Tibial artery (tissue), 4 donors: ENCODE measurements at regions of chr10 and their contacts with region 1.

Region 1: DNA sequence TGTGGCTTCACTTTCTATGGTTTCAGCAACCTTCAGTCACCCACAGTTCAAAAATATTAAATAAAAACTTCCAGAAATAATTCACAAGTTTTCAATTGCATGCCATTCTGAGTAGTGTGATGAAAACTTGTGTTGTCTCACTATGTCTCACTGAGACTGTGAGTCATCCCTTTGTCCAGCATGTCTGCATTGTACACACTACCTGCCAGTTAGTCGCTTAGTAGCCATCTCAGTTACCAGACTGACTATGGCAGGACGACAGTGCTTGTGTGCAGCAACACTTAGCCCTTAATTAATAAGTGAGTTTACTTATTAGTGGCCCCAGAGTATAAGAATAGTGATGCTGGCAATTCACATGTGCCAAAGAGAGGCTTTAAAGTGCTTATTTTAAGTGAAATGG is 22.5 kb downstream of the CCDC186 start:
- DNase-seq: no peak
- H3K4me3 ChIP-seq: no peak overlapping the region
- H3K27ac ChIP-seq: no peak overlapping the region
- H3K4me1 ChIP-seq: no peaks in the 10 kb centered on the region
- H3K27me3 ChIP-seq: no peaks in the 10 kb centered on the region
- CTCF ChIP-seq: no peak

Region 2: DNA sequence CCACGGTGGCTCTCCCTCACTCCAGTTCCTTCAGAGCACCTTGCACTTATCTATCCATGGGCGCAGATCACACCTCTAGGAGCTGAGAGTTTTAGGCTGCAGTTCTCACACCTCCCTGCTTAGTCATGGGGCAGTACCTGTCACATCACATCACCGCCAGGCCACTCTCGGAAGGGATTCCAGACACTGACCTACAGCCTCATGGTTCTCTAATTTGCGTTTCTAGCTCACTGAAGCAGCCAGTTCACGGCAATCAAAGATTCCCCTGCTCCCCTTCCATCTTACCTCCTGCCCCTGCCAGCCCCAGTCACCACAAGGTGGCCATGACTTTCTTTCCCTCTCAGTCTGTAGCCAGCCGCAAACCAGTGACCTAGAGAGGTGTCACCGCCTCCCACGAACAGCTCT is 73.7 kb before region 1 on chr10:
- intact Hi-C with region 1: no loop called
- DNase-seq: no peak
- H3K4me3 ChIP-seq: no peak overlapping the region
- H3K27ac ChIP-seq: no peak overlapping the region
- H3K4me1 ChIP-seq: no peaks in the 10 kb centered on the region
- H3K27me3 ChIP-seq: no peaks in the 10 kb centered on the region
- CTCF ChIP-seq: no peak

Region 3: DNA sequence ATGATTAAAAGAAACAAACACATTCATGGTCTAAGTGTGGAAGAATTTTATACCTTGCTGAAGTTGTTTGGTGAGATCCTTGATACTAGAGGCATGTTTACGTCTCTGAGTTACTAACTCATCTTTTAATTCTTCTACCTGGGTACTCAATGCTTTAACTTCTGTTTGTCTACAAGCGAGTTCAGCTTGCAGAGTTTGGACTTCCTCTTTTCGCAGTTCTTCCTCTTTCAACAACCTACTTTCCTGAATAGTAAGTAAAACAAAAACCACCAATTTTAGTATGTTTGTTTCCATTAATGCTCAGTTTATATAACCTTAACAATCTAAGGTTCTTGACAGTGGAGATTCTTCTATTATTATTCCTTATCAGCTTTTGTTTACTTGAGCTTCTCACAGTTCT is 20.4 kb before region 1 on chr10:
- intact Hi-C with region 1: loop called (anchors 1 kb)
- DNase-seq: no peak
- H3K4me3 ChIP-seq: no peak overlapping the region
- H3K27ac ChIP-seq: no peak overlapping the region
- H3K4me1 ChIP-seq: no peaks in the 10 kb centered on the region
- H3K27me3 ChIP-seq: no peaks in the 10 kb centered on the region
- CTCF ChIP-seq: no peak

Region 4: DNA sequence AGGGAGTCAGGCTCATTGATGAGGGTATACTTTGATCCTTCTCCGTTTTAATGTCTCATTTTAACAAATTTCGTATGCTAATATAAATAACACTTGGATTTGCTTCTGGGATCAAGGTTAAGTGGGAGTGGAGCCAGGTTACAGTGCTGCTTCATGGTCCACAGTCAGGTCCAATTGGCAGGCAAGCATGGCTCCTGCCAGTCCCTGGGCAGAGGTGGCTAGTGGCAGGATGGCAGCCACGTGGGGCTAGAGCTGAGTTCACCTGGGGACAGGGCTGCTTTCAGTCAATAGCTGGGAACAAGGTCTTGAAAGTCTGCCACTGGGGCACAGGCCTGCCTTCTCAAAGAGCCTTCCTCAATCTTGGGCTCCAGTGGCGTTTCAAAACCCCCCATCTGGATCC is 71.6 kb after region 1 on chr10:
- intact Hi-C with region 1: no loop called
- DNase-seq: no peak
- H3K4me3 ChIP-seq: no peak overlapping the region
- H3K27ac ChIP-seq: no peak overlapping the region
- H3K4me1 ChIP-seq: no peaks in the 10 kb centered on the region
- H3K27me3 ChIP-seq: peaks cover 0 to 9% of the 10 kb centered on the region in 2 donors
- CTCF ChIP-seq: no peak

Region 5: GRCh38 chr10:114442136-114442535 is 290.6 kb after region 1 on chr10:
- intact Hi-C with region 1: no loop called
- DNase-seq: no peak
- H3K4me3 ChIP-seq: no peak overlapping the region
- H3K27ac ChIP-seq: no peak overlapping the region
- H3K4me1 ChIP-seq: no peaks in the 10 kb centered on the region
- H3K27me3 ChIP-seq: no peaks in the 10 kb centered on the region
- CTCF ChIP-seq: no peak